PC-9 (cell line): ENCODE measurements at regions of chr2 and their contacts with region 1.

Region 1: GRCh38 chr2:238684362-238685326 is 163.2 kb upstream of the TWIST2 start:
- DNase-seq: peak; percentile 79 to 94
- H3K4me3 ChIP-seq: no peak overlapping the region
- H3K27ac ChIP-seq: peak overlapping the region; percentile 73
- H3K4me1 ChIP-seq: peaks cover 32% of the 10 kb centered on the region
- H3K27me3 ChIP-seq: peaks cover 13% of the 10 kb centered on the region
- CTCF ChIP-seq: no peak

Region 2: GRCh38 chr2:238596571-238597551 is 87.8 kb before region 1 on chr2:
- CTCF ChIA-PET with region 1: no interaction called
- POLR2A ChIA-PET with region 1: no interaction called
- intact Hi-C with region 1: loop called (anchors 1 kb)
- DNase-seq: peak; percentile 67 to 74
- H3K4me3 ChIP-seq: no peak overlapping the region
- H3K27ac ChIP-seq: no peak overlapping the region
- H3K4me1 ChIP-seq: peaks cover 6% of the 10 kb centered on the region; the same call in 1 of the 2 replicates
- H3K27me3 ChIP-seq: peaks cover 75% of the 10 kb centered on the region
- CTCF ChIP-seq: no peak

Region 3: DNA sequence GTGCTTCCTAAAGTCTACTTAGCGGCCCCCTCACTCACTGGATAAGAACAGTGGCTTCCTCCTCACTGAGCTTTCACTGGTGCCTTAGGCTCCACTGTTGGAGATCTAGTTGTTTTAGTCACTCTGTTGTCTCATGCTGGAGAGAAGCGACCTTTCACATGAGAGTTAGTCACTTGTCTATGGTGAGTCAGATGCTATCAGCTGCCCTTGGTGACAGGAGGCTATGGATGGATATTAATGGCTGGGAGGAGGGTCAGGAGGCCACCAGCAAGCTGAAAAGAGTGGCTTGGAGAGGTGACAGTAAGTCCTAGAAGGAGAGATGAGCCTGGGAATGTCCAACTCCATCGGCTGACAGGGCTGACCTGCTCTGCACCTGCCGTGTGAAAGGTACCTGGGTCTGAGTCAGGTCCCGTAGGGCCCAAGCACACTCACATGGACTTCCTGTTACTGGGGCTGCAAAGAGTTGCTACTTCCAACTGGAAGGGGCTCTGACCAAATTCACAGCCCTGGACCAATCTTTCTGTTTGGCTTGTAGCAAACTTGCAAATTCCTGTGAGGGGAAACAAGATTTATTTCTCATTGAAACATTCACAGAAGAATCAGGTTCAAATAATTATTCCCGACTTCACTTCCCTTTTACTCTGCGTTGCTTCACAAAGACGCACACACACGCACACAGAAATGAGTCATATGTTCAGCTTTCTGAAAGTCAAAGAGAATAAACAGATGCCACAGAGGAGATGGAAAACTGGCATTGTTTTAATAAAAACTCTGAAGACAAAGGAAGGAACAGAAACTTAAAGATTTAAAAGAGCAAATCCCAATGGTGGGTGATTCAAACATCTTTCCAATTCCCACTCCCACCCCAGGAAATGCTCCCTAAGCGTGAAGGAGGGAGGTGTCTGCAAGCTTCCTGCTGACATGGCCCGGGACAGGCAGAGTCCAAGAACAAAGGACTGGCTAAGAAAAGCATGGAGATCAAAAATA is 40.3 kb before region 1 on chr2:
- CTCF ChIA-PET with region 1: no interaction called
- POLR2A ChIA-PET with region 1: interaction called, 6 read pairs
- intact Hi-C with region 1: loop called (anchors 2 kb)
- DNase-seq: peak; percentile 69 to 92
- H3K4me3 ChIP-seq: no peak overlapping the region
- H3K27ac ChIP-seq: peak overlapping the region; percentile 46
- H3K4me1 ChIP-seq: peaks cover 30% of the 10 kb centered on the region
- H3K27me3 ChIP-seq: peaks cover 15% of the 10 kb centered on the region
- CTCF ChIP-seq: no peak

Region 4: GRCh38 chr2:238700117-238700457 is 15.4 kb after region 1 on chr2:
- CTCF ChIA-PET with region 1: no interaction called
- POLR2A ChIA-PET with region 1: interaction called, 3 read pairs
- intact Hi-C with region 1: loop called (anchors 2 kb)
- DNase-seq: peak in 1 of 2 experiments; percentile 75
- H3K4me3 ChIP-seq: no peak overlapping the region
- H3K27ac ChIP-seq: no peak overlapping the region
- H3K4me1 ChIP-seq: no peaks in the 10 kb centered on the region
- H3K27me3 ChIP-seq: peaks cover 87% of the 10 kb centered on the region
- CTCF ChIP-seq: no peak

Region 5: GRCh38 chr2:238831177-238831576 is 146.5 kb after region 1 on chr2:
- CTCF ChIA-PET with region 1: no interaction called
- POLR2A ChIA-PET with region 1: no interaction called
- intact Hi-C with region 1: no loop called
- DNase-seq: no peak
- H3K4me3 ChIP-seq: no peak overlapping the region
- H3K27ac ChIP-seq: no peak overlapping the region
- H3K4me1 ChIP-seq: no peaks in the 10 kb centered on the region
- H3K27me3 ChIP-seq: peaks cover 87% of the 10 kb centered on the region
- CTCF ChIP-seq: no peak

Region 6: GRCh38 chr2:238847841-238848690 is 163.4 kb after region 1 on chr2 and contains the start of gene TWIST2:
- CTCF ChIA-PET with region 1: no interaction called
- POLR2A ChIA-PET with region 1: no interaction called
- intact Hi-C with region 1: no loop called
- DNase-seq: peak in 1 of 2 experiments; percentile 68
- H3K4me3 ChIP-seq: no peak within 1 kb of the TSS
- H3K27ac ChIP-seq: no peak within 1 kb of the TSS
- H3K4me1 ChIP-seq: no peaks in the 10 kb centered on the region
- H3K27me3 ChIP-seq: peaks cover 46% of the 10 kb centered on the region
- CTCF ChIP-seq: no peak
- total RNA-seq, gene TWIST2: 4.1 and 5.0 TPM in 2 replicates

Region 7: DNA sequence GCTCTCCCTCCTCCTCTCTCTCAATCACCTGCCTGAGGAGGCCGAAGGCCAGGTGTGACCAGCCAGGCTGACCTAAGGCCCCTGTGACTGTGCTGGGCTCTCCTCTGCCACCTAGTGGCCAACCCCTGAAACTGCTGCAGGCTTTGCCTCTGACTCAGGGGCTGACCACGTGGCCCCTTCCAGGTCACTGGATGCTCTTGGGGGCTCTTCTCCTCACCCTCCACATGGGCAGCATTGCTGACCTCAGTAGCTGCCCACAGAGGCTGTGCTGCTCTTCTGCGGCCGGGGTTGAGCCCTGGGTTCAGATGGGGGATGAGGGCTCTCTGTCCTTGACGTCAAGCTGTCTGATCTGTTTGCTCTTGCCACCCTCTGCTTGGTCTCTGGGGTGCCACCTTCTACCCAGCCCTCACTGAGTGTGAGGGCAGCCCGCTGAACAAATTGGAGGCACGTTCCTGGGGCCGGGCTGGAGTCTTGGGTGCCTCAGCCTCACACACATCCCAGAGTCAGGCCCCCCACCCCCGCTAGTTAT is 286.0 kb after region 1 on chr2:
- CTCF ChIA-PET with region 1: no interaction called
- POLR2A ChIA-PET with region 1: no interaction called
- intact Hi-C with region 1: no loop called
- DNase-seq: peak in 1 of 2 experiments; percentile 84
- H3K4me3 ChIP-seq: no peak overlapping the region
- H3K27ac ChIP-seq: no peak overlapping the region
- H3K4me1 ChIP-seq: no peaks in the 10 kb centered on the region
- H3K27me3 ChIP-seq: peaks cover 45% of the 10 kb centered on the region
- CTCF ChIP-seq: peak; percentile 100